ENCODE measurements at regions of chr6 and their contacts with region 1.

Region 1: DNA sequence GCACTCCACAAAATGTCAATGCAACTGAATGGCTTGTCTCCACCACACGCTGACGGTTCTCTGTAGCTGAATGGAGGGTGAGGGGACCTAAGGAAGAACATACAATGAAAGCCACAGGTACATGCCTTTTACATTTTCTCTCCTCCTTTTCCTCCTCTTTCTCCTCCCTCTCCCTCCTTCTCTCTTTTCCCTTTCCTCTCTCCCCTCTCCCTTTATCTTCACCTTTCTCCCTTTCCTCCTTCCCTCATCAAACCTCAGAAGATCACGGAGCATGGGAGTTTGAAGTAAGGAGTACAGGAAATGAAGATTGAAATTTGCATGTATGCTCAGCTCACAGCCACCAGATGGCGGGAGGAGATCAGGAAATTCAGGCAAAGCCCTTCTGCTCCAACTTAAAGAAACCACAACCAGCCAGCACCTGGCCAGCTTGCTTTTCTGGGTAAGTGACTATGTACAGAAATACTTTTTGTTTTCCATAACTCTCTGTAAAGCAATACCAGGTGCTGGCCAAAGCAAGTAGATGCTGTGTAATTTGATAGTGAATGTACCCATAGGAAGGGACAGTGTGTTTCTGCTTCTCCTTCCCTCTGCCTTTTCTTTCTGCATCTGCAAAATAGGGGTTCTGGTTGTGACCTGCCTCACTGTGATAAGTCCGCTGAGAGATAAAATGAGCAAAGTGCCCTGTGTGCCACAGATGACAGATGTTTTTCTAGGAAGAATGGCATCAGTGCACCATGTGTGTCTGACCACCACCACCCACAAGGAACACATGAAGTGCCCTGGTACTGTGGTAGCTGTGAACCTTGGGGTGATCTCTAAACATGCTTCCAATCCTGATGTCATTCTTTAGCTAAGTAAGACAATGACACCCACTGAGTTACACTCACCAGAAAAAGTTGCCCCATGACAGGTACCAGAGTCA is 18.6 kb upstream of the FOXO3 start:
- DNase-seq: peak; percentile 75
- ATAC-seq: peak; percentile 92
- H3K4me3 ChIP-seq: peak overlapping the region; percentile 10 to 22; a peak in 1 of 4 replicates
- H3K27ac ChIP-seq: no peak overlapping the region
- H3K4me1 ChIP-seq: peaks cover 0 to 5% of the 10 kb centered on the region in 2 experiments; a peak in 1 of 4 replicates
- H3K27me3 ChIP-seq: no peaks in the 10 kb centered on the region
- CTCF ChIP-seq: peak; percentile 68 to 95 (median 90)
- POLR2A ChIP-seq: no peak
- RAD21 ChIP-seq: peak; percentile 100

Region 2: GRCh38 chr6:108782179-108783041 is 240.3 kb after region 1 on chr6:
- CTCF ChIA-PET with region 1: no interaction called
- POLR2A ChIA-PET with region 1: no interaction called
- RAD21 ChIA-PET with region 1: no interaction called
- intact Hi-C with region 1: loop called (anchors 1 kb)
- DNase-seq: peak; percentile 80
- ATAC-seq: peak; percentile 96
- H3K4me3 ChIP-seq: peak overlapping the region; percentile 31 to 41
- H3K27ac ChIP-seq: 0 out of 2 replicates have a peak overlapping the region, but pooled peaks have one; percentile 1
- H3K4me1 ChIP-seq: peaks cover 4 to 22% of the 10 kb centered on the region in 2 experiments; a peak in 3 of 4 replicates
- H3K27me3 ChIP-seq: no peaks in the 10 kb centered on the region
- CTCF ChIP-seq: peak; percentile 69 to 87 (median 79); a peak in 5 of 6 replicates
- POLR2A ChIP-seq: no peak
- RAD21 ChIP-seq: peak; percentile 96

Region 3: DNA sequence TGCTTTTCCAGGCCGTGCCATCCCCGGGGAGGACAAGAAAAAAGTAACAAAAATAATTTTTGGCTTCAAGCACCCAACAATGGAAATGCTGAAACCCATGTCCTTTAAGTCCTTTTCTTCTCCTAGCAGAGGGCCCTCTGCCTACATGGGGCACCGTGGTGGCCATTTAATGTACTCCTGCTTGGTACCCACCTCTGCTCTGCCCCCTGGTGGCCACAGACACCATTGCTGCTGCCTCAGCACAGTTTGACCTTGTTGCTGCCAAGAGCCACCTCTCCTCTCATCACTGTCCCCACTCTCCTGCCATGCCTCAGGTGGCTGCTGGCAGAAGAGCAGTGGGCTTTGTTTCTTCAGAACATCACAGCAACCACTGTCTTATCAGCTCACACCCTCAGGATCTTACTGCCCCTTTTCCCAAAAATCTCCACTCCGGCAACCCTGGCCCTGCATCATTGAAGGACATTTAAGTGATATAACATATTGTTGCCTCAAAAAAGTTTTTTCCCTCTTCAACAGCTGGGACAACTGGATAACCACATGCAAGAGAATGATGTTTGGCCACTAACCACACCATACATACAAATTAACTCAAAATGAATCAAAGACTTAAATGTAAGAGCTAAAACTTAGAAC is 293.2 kb after region 1 on chr6:
- CTCF ChIA-PET with region 1: interaction called, 7 read pairs
- POLR2A ChIA-PET with region 1: no interaction called
- RAD21 ChIA-PET with region 1: interaction called, 3 read pairs
- intact Hi-C with region 1: loop called (anchors 1 kb)
- DNase-seq: peak; percentile 67
- ATAC-seq: peak; percentile 99
- H3K4me3 ChIP-seq: no peak overlapping the region
- H3K27ac ChIP-seq: no peak overlapping the region
- H3K4me1 ChIP-seq: no peaks in the 10 kb centered on the region
- H3K27me3 ChIP-seq: no peaks in the 10 kb centered on the region
- CTCF ChIP-seq: peak; percentile 78 to 92 (median 85)
- POLR2A ChIP-seq: no peak
- RAD21 ChIP-seq: peak; percentile 88

Region 4: DNA sequence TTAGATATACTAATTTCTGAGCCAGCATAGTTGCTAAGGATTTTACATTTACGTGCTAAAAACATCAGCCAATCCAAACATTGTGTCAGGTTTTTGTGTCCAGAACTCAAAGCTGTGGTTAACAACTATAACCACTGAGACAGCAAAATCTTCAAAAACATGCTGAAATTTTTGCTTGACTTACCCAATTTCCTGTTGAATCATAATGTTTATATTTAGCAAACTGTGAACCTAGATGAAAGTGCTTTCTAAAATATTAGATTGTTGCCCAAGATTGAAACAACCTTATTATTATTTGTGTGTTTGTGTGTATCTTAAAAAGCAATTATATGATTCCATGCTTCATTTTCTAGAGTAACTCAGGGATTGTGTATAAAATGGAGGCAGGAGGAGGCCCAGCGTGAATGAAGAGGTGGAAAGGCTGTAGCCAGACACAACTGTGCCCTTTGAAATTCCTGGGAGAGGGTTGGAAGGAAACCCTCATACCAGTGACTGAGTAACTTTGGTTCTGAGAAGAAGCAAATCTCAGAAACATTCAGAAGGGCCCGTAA is 354.1 kb after region 1 on chr6:
- CTCF ChIA-PET with region 1: interaction called, 113 read pairs
- POLR2A ChIA-PET with region 1: no interaction called
- RAD21 ChIA-PET with region 1: interaction called, 14 to 25 read pairs
- intact Hi-C with region 1: loop called (anchors 1 kb)
- DNase-seq: no peak
- ATAC-seq: no peak
- H3K4me3 ChIP-seq: no peak overlapping the region
- H3K27ac ChIP-seq: no peak overlapping the region
- H3K4me1 ChIP-seq: peaks cover 6 to 16% of the 10 kb centered on the region in 2 experiments
- H3K27me3 ChIP-seq: no peaks in the 10 kb centered on the region
- CTCF ChIP-seq: no peak
- POLR2A ChIP-seq: no peak
- RAD21 ChIP-seq: no peak

Region 5: DNA sequence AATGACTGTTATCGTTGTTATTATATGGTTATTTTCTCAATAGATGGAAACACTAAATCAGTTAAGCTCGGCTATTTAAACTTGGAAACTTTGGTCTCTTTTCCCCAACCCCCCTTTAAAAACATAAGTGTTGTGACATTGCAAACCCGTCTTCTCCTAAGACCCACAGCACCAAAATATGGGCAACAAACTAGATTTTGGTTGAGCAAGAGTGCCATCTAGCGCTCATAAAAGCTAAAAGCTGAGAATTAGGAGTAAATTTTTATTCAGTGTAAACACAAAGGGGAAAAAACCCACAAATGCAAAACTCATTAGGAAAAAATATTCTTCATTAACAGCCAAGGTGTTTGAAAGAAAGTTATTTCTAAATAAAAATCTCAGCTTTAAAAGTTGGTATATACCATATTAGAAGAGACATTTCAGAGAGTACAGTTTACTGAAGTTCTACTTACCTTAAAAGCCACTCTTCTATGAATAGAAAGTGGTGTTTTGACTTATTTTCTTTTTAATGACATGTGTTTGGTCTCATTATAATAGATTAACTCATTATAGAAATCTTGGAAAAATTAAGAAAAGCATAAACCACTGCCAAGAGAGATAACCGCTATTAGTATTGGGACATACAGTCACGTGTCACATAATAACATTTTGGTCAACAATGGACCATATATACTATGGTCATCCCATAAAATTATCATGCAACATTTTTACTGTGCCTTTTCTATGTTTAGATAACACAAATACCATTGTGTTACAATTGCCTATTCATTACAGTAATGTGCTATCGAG is 531.4 kb after region 1 on chr6:
- CTCF ChIA-PET with region 1: interaction called, 64 read pairs
- POLR2A ChIA-PET with region 1: no interaction called
- RAD21 ChIA-PET with region 1: interaction called in 1 of 2 experiments, 6 read pairs
- intact Hi-C with region 1: loop called (anchors 1 kb)
- DNase-seq: peak; percentile 56
- ATAC-seq: peak; percentile 72
- H3K4me3 ChIP-seq: no peak overlapping the region
- H3K27ac ChIP-seq: no peak overlapping the region
- H3K4me1 ChIP-seq: no peaks in the 10 kb centered on the region
- H3K27me3 ChIP-seq: no peaks in the 10 kb centered on the region
- CTCF ChIP-seq: peak; percentile 54 to 76 (median 71)
- POLR2A ChIP-seq: no peak
- RAD21 ChIP-seq: peak; percentile 85

Region 6: DNA sequence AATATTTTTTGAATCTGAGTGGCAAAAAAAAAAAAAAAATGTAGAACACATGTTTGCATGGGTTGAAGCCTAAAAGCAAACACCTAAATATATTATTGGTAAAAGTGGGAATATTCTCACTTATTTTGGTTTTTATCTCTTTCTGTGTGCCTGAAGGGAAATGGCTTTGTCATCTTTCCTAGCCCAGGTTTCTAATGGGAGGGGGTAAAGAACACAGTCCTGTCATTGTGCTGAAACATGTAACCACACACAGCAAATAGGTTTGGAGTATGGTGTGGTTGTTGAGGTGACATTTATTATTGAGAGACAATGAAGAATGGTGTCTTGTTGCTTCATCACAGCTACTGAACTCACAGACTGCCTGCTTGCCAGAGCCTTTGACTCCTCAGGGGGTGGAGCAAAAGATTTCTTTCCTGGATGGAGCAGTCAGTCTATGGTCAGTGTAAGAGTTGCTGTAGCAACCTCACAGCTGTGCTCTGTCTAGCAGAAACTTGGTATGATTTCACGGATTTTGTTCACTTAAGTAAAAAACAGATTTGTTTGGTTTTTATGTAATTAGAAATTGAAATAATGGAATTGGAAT is 623.4 kb after region 1 on chr6:
- CTCF ChIA-PET with region 1: no interaction called
- POLR2A ChIA-PET with region 1: no interaction called
- RAD21 ChIA-PET with region 1: no interaction called
- intact Hi-C with region 1: loop called (anchors 10 kb)
- DNase-seq: no peak
- ATAC-seq: peak; percentile 50; the same call in 1 of the 2 replicates
- H3K4me3 ChIP-seq: no peak overlapping the region
- H3K27ac ChIP-seq: no peak overlapping the region
- H3K4me1 ChIP-seq: peaks cover 0 to 4% of the 10 kb centered on the region in 2 experiments; a peak in 2 of 4 replicates
- H3K27me3 ChIP-seq: no peaks in the 10 kb centered on the region
- CTCF ChIP-seq: no peak
- POLR2A ChIP-seq: no peak
- RAD21 ChIP-seq: no peak

Region 7: DNA sequence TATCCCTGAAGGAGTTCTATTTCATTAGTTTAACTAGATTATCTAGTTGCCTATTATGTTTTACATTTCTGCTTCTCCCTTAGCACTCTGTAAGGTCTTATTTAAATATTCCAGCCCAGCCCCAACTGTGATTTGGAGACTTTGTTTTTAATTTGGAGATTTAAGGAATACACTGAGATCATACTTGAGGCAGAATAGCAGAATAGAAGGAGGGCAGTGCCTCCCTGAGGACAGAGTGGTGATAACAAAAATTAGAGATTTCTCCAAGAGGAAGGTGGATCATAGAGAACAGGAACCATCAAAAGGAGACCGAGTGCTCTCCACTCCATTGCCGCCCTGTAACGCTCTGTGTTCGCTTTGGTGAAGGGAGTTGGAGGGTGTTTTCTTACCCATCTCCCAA is 854.9 kb after region 1 on chr6:
- CTCF ChIA-PET with region 1: interaction called, 3 read pairs
- POLR2A ChIA-PET with region 1: no interaction called
- RAD21 ChIA-PET with region 1: no interaction called
- intact Hi-C with region 1: loop called (anchors 5 kb)
- DNase-seq: no peak
- ATAC-seq: peak; percentile 74
- H3K4me3 ChIP-seq: no peak overlapping the region
- H3K27ac ChIP-seq: no peak overlapping the region
- H3K4me1 ChIP-seq: peaks cover 0 to 18% of the 10 kb centered on the region in 2 experiments; a peak in 3 of 4 replicates
- H3K27me3 ChIP-seq: no peaks in the 10 kb centered on the region
- CTCF ChIP-seq: peak; percentile 16 to 58 (median 47); a peak in 4 of 6 replicates
- POLR2A ChIP-seq: no peak
- RAD21 ChIP-seq: peak; percentile 73

Measured in HCT116 (cell line).